Activated naive CD4-positive, alpha-beta T cell treated with anti-CD3 and anti-CD28 coated beads for 36 hours (primary cell): ENCODE measurements at regions of chr1 and their contacts with region 1.

Region 1: DNA sequence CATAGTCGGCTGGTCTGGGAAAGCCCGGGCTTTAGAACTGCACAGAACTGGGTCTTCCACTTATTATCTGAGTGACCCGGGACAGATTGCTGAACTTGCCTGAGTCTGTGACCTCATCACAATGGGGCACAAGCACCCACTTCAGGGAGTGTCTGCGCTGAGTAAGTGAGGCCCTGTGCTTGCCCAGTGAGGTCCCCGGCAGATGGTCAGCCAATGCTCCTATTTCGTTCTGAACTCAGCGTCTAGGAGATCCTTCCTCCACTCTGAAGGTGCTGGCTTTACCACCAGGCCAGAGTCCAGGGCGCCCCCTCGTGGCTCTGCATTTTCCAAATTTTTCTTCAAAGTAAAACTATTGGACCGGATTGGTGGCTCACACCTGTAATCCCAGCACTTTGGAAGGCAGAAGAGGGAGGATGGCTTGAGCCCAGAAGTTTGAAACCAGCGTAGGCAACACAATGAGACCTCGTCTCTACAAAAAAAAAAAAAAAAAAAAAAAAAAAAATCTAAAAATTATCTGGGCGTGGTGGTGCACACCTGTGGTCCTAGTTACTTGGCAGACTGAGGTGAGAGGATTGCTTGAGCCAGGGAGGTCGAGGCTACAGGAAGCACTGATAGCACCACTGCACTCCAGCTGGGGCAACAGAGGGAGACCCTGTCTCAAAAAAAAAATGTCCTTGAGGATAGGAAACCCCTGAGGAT is 61.7 kb downstream of the FCRL5 start:
- DNase-seq: peak; percentile 86
- H3K4me3 Mint-ChIP-seq: no peak overlapping the region
- H3K27ac Mint-ChIP-seq: no peak overlapping the region
- H3K4me1 Mint-ChIP-seq: no peaks in the 10 kb centered on the region
- H3K27me3 Mint-ChIP-seq: peaks cover 8% of the 10 kb centered on the region

Region 2: GRCh38 chr1:157170677-157171515 is 319.7 kb before region 1 on chr1:
- CTCF ChIA-PET with region 1: interaction called, 4 read pairs
- intact Hi-C with region 1: loop called (anchors 5 kb)
- DNase-seq: peak; percentile 74
- H3K4me3 Mint-ChIP-seq: no peak overlapping the region
- H3K27ac Mint-ChIP-seq: no peak overlapping the region
- H3K4me1 Mint-ChIP-seq: no peaks in the 10 kb centered on the region
- H3K27me3 Mint-ChIP-seq: peaks cover 13% of the 10 kb centered on the region

Region 3: DNA sequence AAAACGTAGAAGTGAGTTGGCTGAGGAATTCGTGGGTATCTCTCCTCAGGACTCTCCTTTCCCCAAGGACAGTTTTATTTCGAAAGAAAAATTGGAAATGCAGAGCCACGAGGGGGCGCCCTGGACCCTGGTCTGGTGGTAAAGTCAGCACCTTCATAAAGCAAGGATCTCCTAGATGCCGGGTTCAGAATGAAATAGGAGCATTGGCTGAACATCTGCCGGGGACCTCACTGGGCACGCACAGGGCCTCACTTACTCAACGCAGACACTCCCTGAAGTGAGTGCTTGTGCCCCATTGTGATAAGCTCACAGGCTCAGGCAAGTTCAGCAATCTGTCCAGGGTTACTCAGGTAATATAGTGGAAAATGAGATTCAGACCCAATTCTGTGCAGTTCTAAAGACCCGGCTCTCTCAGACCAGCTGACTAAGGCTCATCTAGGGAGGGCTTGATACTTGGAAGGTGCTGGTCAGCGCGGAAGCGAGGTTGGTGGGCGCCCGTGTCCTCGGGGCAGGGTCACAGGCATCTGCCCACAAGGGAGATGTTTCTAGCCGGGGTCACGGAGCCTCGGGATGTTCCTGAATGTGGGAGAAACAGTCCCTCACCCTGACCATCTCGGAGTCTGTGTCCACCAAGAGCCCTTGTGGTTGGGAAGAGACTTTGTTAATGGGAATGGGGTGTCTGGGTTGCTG is 296.8 kb before region 1 on chr1:
- CTCF ChIA-PET with region 1: interaction called, 15 read pairs
- intact Hi-C with region 1: loop called (anchors 1 kb)
- DNase-seq: peak; percentile 80
- H3K4me3 Mint-ChIP-seq: no peak overlapping the region
- H3K27ac Mint-ChIP-seq: no peak overlapping the region
- H3K4me1 Mint-ChIP-seq: peaks cover 3% of the 10 kb centered on the region
- H3K27me3 Mint-ChIP-seq: peaks cover 26% of the 10 kb centered on the region

Region 4: DNA sequence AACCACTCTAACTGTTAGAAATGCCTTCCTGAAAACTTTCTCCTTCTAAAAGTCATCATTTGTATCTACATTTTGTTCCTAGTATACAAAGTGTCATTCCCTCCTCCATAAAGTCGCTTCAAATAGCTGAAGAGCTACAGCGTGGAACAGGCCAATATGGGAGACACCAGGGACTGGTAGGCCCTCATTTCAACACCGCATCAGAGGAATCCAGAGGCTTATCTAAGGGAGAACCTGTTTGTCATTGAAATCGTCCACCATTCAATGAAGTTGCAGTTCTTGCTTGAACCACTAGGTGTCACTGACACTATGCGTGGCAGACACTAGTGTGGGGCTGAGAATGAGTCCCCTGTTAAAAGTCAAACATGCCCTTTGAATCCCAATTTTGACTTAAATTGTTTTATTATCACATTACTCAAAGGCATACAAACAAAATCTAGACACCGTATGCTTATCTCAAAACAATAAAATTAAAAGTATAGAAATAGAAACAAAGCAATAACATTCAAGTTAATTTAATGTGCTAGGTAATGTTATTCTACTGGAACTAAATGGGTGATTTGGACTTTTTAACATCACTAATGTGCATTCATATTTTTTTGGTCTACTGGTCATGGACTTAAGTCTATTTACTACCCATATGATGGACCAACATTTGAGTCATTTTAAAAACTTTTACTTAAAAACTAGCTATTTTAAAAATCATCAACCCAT is 120.7 kb before region 1 on chr1:
- CTCF ChIA-PET with region 1: interaction called, 19 read pairs
- intact Hi-C with region 1: loop called (anchors 1 kb)
- DNase-seq: peak; percentile 58
- H3K4me3 Mint-ChIP-seq: no peak overlapping the region
- H3K27ac Mint-ChIP-seq: no peak overlapping the region
- H3K4me1 Mint-ChIP-seq: no peaks in the 10 kb centered on the region
- H3K27me3 Mint-ChIP-seq: peaks cover 8% of the 10 kb centered on the region

Region 5: GRCh38 chr1:157380523-157380922 is 110.1 kb before region 1 on chr1:
- CTCF ChIA-PET with region 1: interaction called, 4 read pairs
- intact Hi-C with region 1: loop called (anchors 1 kb)
- DNase-seq: no peak
- H3K4me3 Mint-ChIP-seq: no peak overlapping the region
- H3K27ac Mint-ChIP-seq: no peak overlapping the region
- H3K4me1 Mint-ChIP-seq: no peaks in the 10 kb centered on the region
- H3K27me3 Mint-ChIP-seq: peaks cover 22% of the 10 kb centered on the region

Region 6: GRCh38 chr1:158458263-158458662 is 967.6 kb after region 1 on chr1:
- CTCF ChIA-PET with region 1: no interaction called
- intact Hi-C with region 1: no loop called
- DNase-seq: no peak
- H3K4me3 Mint-ChIP-seq: no peak overlapping the region
- H3K27ac Mint-ChIP-seq: no peak overlapping the region
- H3K4me1 Mint-ChIP-seq: no peaks in the 10 kb centered on the region
- H3K27me3 Mint-ChIP-seq: peaks cover 18% of the 10 kb centered on the region